ENCODE measurements at regions of chr22 and their contacts with region 1.

Region 1: GRCh38 chr22:19891317-19892256 is 36.9 kb upstream of the GNB1L start:
- DNase-seq: peak; percentile 90
- H3K4me3 ChIP-seq: no peak overlapping the region
- H3K27ac ChIP-seq: peak overlapping the region; percentile 83
- H3K4me1 ChIP-seq: peaks cover 69% of the 10 kb centered on the region
- H3K27me3 ChIP-seq: no peaks in the 10 kb centered on the region
- CTCF ChIP-seq: no peak
- POLR2A ChIP-seq: peak; percentile 87

Region 2: GRCh38 chr22:19874307-19875060 is 17.1 kb before region 1 on chr22:
- CTCF ChIA-PET with region 1: interaction called, 6 read pairs
- POLR2A ChIA-PET with region 1: interaction called, 5 read pairs
- dilution Hi-C with region 1: no loop called
- intact Hi-C with region 1: loop called (anchors 1 kb)
- DNase-seq: peak; percentile 77
- H3K4me3 ChIP-seq: no peak overlapping the region
- H3K27ac ChIP-seq: peak overlapping the region; percentile 77
- H3K4me1 ChIP-seq: peaks cover 54% of the 10 kb centered on the region
- H3K27me3 ChIP-seq: no peaks in the 10 kb centered on the region
- CTCF ChIP-seq: no peak
- POLR2A ChIP-seq: peak; percentile 35

Region 3: GRCh38 chr22:19941365-19942082 is 49.9 kb after region 1 on chr22 and contains the starts of genes COMT and TXNRD2:
- CTCF ChIA-PET with region 1: no interaction called
- POLR2A ChIA-PET with region 1: no interaction called
- dilution Hi-C with region 1: no loop called
- intact Hi-C with region 1: loop called (anchors 1 kb)
- DNase-seq: peak; percentile 57
- H3K4me3 ChIP-seq: peak within 1 kb of the TSS; percentile 45 to 86 (median 83)
- H3K27ac ChIP-seq: peak within 1 kb of the TSS; percentile 84
- H3K4me1 ChIP-seq: peaks cover 41% of the 10 kb centered on the region
- H3K27me3 ChIP-seq: no peaks in the 10 kb centered on the region
- CTCF ChIP-seq: no peak
- POLR2A ChIP-seq: peak; percentile 82
- total RNA-seq, gene COMT: 221 and 246 TPM in 2 replicates
- total RNA-seq, gene TXNRD2: 211 and 245 TPM in 2 replicates

Measured in endothelial cell of umbilical vein (primary cell).